Transverse colon (tissue), 4 donors: ENCODE measurements at regions of chr14 and their contacts with region 1.

Region 1: DNA sequence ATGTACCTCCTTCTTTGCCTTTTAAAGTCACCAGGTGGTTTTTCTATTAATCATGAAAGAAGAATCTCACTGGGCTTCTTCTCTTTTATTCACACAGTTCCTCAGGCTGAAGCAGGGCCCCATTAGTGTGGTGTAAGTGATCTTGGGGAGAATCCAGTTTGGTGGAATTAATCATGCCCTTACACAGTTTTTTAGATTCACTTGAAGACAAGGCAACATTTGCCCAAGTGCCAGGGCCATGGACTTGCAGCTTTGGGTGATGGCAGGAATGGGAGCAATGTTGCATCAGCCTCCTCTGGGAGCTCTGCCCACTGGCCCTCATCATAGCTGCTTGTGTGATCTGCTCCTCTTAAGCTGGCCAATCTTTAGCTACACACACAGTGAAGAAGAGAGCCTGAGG is 33.8 kb downstream of the KCNK10 start:
- DNase-seq: no peak
- H3K4me3 ChIP-seq: no peak overlapping the region
- H3K27ac ChIP-seq: no peak overlapping the region
- H3K4me1 ChIP-seq: no peaks in the 10 kb centered on the region
- H3K27me3 ChIP-seq: no peaks in the 10 kb centered on the region
- CTCF ChIP-seq: no peak
- EP300 ChIP-seq: no peak
- POLR2A ChIP-seq: no peak

Region 2: DNA sequence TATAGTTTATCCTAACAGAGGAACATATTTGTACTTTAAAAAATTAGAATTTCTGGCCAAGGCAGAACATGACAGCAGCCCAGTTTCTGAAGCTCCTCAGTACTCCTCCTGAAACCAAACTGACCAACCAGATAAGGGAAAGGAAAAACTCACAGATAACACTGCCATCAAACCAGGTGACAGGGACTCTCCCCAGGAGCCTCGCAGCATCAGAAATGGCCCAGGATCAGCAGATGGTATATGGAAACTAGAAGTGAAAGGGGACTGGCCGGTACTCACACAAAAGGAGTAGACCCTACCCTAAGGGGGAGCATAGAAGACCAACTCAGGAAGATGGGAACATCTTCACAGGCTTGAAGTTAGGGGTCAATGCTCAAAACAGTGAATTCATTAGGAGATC is 318.2 kb before region 1 on chr14:
- in situ Hi-C with region 1: no loop called
- intact Hi-C with region 1: no loop called
- DNase-seq: no peak
- H3K4me3 ChIP-seq: no peak overlapping the region
- H3K27ac ChIP-seq: no peak overlapping the region
- H3K4me1 ChIP-seq: no peaks in the 10 kb centered on the region
- H3K27me3 ChIP-seq: no peaks in the 10 kb centered on the region
- CTCF ChIP-seq: no peak
- EP300 ChIP-seq: no peak
- POLR2A ChIP-seq: no peak

Region 3: GRCh38 chr14:88321692-88322503 is 32.7 kb after region 1 on chr14:
- in situ Hi-C with region 1: no loop called
- intact Hi-C with region 1: loop called (anchors 1 kb)
- DNase-seq: no peak
- H3K4me3 ChIP-seq: no peak overlapping the region
- H3K27ac ChIP-seq: no peak overlapping the region
- H3K4me1 ChIP-seq: peaks cover 0 to 16% (median 8%) of the 10 kb centered on the region in 4 donors
- H3K27me3 ChIP-seq: peaks cover 99% of the 10 kb centered on the region
- CTCF ChIP-seq: no peak
- EP300 ChIP-seq: no peak
- POLR2A ChIP-seq: no peak

Region 4: GRCh38 chr14:88590173-88590572 is 300.9 kb after region 1 on chr14:
- in situ Hi-C with region 1: no loop called
- intact Hi-C with region 1: no loop called
- DNase-seq: no peak
- H3K4me3 ChIP-seq: no peak overlapping the region
- H3K27ac ChIP-seq: no peak overlapping the region
- H3K4me1 ChIP-seq: peaks cover 0 to 10% (median 5%) of the 10 kb centered on the region in 4 donors
- H3K27me3 ChIP-seq: no peaks in the 10 kb centered on the region
- CTCF ChIP-seq: no peak
- EP300 ChIP-seq: no peak
- POLR2A ChIP-seq: no peak